Activated naive CD4-positive, alpha-beta T cell treated with anti-CD3 and anti-CD28 coated beads for 36 hours (primary cell): ENCODE measurements at regions of chrX and their contacts with region 1.

Region 1: DNA sequence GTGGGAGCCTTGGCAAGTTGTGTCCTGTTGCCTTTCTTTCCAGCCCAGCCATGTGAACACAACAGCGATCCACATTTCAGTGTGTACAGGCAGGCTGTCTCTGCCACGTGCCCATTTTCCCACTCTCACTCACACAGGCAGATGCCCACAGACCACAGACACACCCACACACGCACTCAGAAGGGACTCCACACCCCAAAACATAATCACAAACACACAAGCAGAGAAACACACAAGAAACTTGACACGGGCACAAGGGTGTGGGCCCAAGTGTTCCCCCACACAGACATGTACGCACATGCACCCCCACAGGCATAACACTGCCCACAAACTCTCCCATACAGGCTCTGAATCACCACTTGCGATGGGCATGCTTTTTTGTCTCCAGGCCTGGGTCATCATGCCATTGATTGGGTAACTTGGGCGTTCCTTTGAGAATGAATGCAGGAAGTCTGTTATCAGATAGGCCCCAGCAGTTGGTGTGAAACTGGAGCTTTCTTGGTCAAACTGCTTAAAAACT is 84.3 kb downstream of the NBDY start:
- DNase-seq: peak; percentile 56
- H3K4me3 Mint-ChIP-seq: peak overlapping the region; percentile 69
- H3K27ac Mint-ChIP-seq: peak overlapping the region; percentile 95
- H3K4me1 Mint-ChIP-seq: peaks cover 36% of the 10 kb centered on the region
- H3K27me3 Mint-ChIP-seq: no peaks in the 10 kb centered on the region

Region 2: GRCh38 chrX:56382278-56382677 is 431.1 kb before region 1 on chrX:
- CTCF ChIA-PET with region 1: no interaction called
- intact Hi-C with region 1: loop called (anchors 5 kb)
- DNase-seq: peak; percentile 41
- H3K4me3 Mint-ChIP-seq: no peak overlapping the region
- H3K27ac Mint-ChIP-seq: peak overlapping the region; percentile 82
- H3K4me1 Mint-ChIP-seq: peaks cover 44% of the 10 kb centered on the region
- H3K27me3 Mint-ChIP-seq: no peaks in the 10 kb centered on the region

Region 3: GRCh38 chrX:57040051-57040450 is 226.7 kb after region 1 on chrX:
- CTCF ChIA-PET with region 1: no interaction called
- intact Hi-C with region 1: no loop called
- DNase-seq: no peak
- H3K4me3 Mint-ChIP-seq: no peak overlapping the region
- H3K27ac Mint-ChIP-seq: no peak overlapping the region
- H3K4me1 Mint-ChIP-seq: no peaks in the 10 kb centered on the region
- H3K27me3 Mint-ChIP-seq: peaks cover 3% of the 10 kb centered on the region

Region 4: DNA sequence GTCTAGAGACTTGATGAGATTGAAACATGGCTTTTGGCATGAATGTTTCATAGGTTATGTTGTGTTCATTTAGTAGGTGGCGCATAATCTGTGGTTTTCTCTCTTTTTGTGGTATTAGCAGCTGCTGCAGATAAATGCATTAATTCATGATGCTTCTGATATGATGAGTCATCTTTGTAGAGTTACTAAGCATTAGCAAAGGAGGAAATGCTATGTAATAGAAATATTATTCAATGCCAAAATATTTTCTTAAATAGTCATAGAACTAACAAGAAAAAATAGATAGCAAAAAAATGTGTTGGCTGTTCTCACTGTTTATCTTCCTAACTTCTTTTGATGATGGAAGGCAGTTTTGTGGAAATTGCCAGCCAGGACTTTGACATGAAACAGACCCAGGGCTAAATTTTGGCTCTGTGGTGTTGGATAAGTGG is 782.0 kb after region 1 on chrX:
- CTCF ChIA-PET with region 1: no interaction called
- intact Hi-C with region 1: loop called (anchors 5 kb)
- DNase-seq: no peak
- H3K4me3 Mint-ChIP-seq: peak overlapping the region; percentile 46
- H3K27ac Mint-ChIP-seq: peak overlapping the region; percentile 71
- H3K4me1 Mint-ChIP-seq: peaks cover 24% of the 10 kb centered on the region
- H3K27me3 Mint-ChIP-seq: no peaks in the 10 kb centered on the region